Panc1 (cell line): ENCODE measurements at regions of chr19 and their contacts with region 1.

Region 1: DNA sequence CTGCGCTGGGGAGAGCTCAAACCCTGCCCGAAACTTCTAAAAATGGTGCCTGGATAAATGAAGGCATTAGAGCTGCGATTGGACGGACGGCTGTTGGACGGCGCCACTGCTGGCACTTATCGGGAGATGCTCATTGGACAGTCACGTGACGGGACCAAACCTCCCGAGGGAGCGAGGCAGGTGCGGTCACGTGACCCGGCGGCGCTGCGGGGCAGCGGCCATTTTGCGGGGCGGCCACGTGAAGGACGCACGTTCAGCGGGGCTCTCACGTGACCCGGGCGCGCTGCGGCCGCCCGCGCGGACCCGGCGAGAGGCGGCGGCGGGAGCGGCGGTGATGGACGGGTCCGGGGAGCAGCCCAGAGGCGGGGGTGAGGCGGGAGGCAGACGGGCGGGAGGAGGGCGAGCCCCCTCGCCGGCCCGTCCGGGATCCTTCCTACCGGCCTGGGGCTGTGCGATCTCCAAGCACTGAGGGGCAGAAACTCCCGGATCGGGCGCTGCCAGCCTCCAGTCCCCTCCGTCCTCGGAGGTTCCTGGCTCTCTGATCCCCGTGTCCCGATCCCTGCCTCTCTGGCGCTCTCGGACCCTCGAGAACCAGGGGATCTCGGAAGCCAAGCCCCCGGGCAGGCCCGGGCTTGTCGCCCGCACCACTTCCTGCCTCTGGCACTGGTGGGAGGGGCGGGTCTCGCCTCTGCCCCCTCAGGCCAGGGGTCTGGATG is at the start of gene BAX:
- DNase-seq: peak; percentile 62
- ATAC-seq: peak; percentile 97
- H3K4me3 ChIP-seq: peak within 1 kb of the TSS; percentile 81 to 87
- H3K27ac ChIP-seq: peak within 1 kb of the TSS; percentile 83
- H3K4me1 ChIP-seq: peaks cover 4% of the 10 kb centered on the region; the same call in 1 of the 2 replicates
- H3K27me3 ChIP-seq: no peaks in the 10 kb centered on the region
- CTCF ChIP-seq: no peak
- total RNA-seq, gene BAX: 100 TPM

Region 2: GRCh38 chr19:48933382-48933932 is 21.3 kb before region 1 on chr19 and contains the start of gene DHDH:
- CTCF ChIA-PET with region 1: no interaction called
- POLR2A ChIA-PET with region 1: interaction called, 12 read pairs
- in situ Hi-C with region 1: no loop called
- intact Hi-C with region 1: no loop called
- DNase-seq: peak; percentile 33
- ATAC-seq: peak; percentile 93
- H3K4me3 ChIP-seq: peak within 1 kb of the TSS; percentile 48 to 65
- H3K27ac ChIP-seq: 0 out of 2 replicates have a peak within 1 kb of the TSS, but pooled peaks have one; percentile 15
- H3K4me1 ChIP-seq: no peaks in the 10 kb centered on the region
- H3K27me3 ChIP-seq: no peaks in the 10 kb centered on the region
- CTCF ChIP-seq: no peak
- total RNA-seq, gene DHDH: 0.85 TPM